ENCODE measurements at regions of chr11 and their contacts with region 1.

Region 1: GRCh38 chr11:33161120-33162005 is at the start of gene CSTF3:
- DNase-seq: peak; percentile 99 to 100
- ATAC-seq: peak; percentile 99
- H3K4me3 ChIP-seq: peak within 1 kb of the TSS; percentile 85 to 97 (median 92)
- H3K27ac ChIP-seq: peak within 1 kb of the TSS; percentile 88 to 95 (median 90)
- H3K4me1 ChIP-seq: peaks cover 24 to 40% of the 10 kb centered on the region in 2 donors
- H3K27me3 ChIP-seq: no peaks in the 10 kb centered on the region
- CTCF ChIP-seq: peak; percentile 52 to 82 (median 67)
- POLR2A ChIP-seq: peak; percentile 57 to 71
- total RNA-seq, gene CSTF3: 3.3 to 9.5 (median 6.1) TPM

Region 2: GRCh38 chr11:32583459-32584271 is 577.7 kb before region 1 on chr11 and contains the start of gene EIF3M:
- in situ Hi-C with region 1: loop called in 2 of 4 experiments (anchors 25 kb)
- intact Hi-C with region 1: loop called (anchors 10 kb)
- DNase-seq: peak; percentile 88 to 94
- ATAC-seq: peak; percentile 96 to 98
- H3K4me3 ChIP-seq: peak within 1 kb of the TSS; percentile 76 to 92 (median 80)
- H3K27ac ChIP-seq: peak within 1 kb of the TSS; percentile 76 to 88 (median 80)
- H3K4me1 ChIP-seq: peaks cover 21 to 24% of the 10 kb centered on the region in 2 donors
- H3K27me3 ChIP-seq: no peaks in the 10 kb centered on the region
- CTCF ChIP-seq: no peak
- POLR2A ChIP-seq: peak; percentile 55 to 71
- total RNA-seq, gene EIF3M: 335 to 393 (median 355) TPM

Region 3: GRCh38 chr11:32870676-32871075 is 290.7 kb before region 1 on chr11:
- in situ Hi-C with region 1: no loop called
- intact Hi-C with region 1: no loop called
- DNase-seq: no peak
- ATAC-seq: no peak
- H3K4me3 ChIP-seq: no peak overlapping the region
- H3K27ac ChIP-seq: no peak overlapping the region
- H3K4me1 ChIP-seq: no peaks in the 10 kb centered on the region
- H3K27me3 ChIP-seq: no peaks in the 10 kb centered on the region
- CTCF ChIP-seq: peak in 1 of 5 experiments; percentile 41
- POLR2A ChIP-seq: no peak

Region 4: GRCh38 chr11:33015621-33016551 is 145.5 kb before region 1 on chr11 and contains the start of gene DEPDC7:
- in situ Hi-C with region 1: no loop called
- intact Hi-C with region 1: loop called (anchors 1 kb)
- DNase-seq: peak; percentile 74 to 88
- ATAC-seq: peak; percentile 94 to 97
- H3K4me3 ChIP-seq: peak within 1 kb of the TSS; percentile 65 to 89 (median 69)
- H3K27ac ChIP-seq: peak within 1 kb of the TSS; percentile 76 to 86 (median 84)
- H3K4me1 ChIP-seq: peaks cover 26% of the 10 kb centered on the region in 2 donors
- H3K27me3 ChIP-seq: no peaks in the 10 kb centered on the region
- CTCF ChIP-seq: no peak
- POLR2A ChIP-seq: peak; percentile 45 to 74
- total RNA-seq, gene DEPDC7: 2.0 to 5.8 (median 2.8) TPM

Region 5: GRCh38 chr11:33039274-33040032 is 121.9 kb before region 1 on chr11 and contains the start of gene TCP11L1:
- in situ Hi-C with region 1: no loop called
- intact Hi-C with region 1: loop called (anchors 2 kb)
- DNase-seq: peak; percentile 83 to 88
- ATAC-seq: peak; percentile 94 to 95
- H3K4me3 ChIP-seq: peak within 1 kb of the TSS; percentile 79 to 97 (median 91)
- H3K27ac ChIP-seq: peak within 1 kb of the TSS; percentile 90 to 95 (median 94)
- H3K4me1 ChIP-seq: peaks cover 6 to 15% of the 10 kb centered on the region in 2 donors
- H3K27me3 ChIP-seq: no peaks in the 10 kb centered on the region
- CTCF ChIP-seq: no peak
- POLR2A ChIP-seq: peak; percentile 51 to 64
- total RNA-seq, gene TCP11L1: 8.3 to 22.4 (median 19.0) TPM

Region 6: GRCh38 chr11:33329705-33330329 is 168.5 kb after region 1 on chr11:
- in situ Hi-C with region 1: loop called (anchors 5 kb)
- intact Hi-C with region 1: loop called (anchors 2 kb)
- DNase-seq: peak; percentile 27 to 43
- ATAC-seq: peak; percentile 74 to 90
- H3K4me3 ChIP-seq: no peak overlapping the region
- H3K27ac ChIP-seq: peak overlapping the region in 3 of 4 donors; percentile 4 to 47 (median 11)
- H3K4me1 ChIP-seq: peaks cover 84 to 87% of the 10 kb centered on the region in 2 donors
- H3K27me3 ChIP-seq: no peaks in the 10 kb centered on the region
- CTCF ChIP-seq: peak; percentile 57 to 72 (median 64)
- POLR2A ChIP-seq: no peak

Region 7: GRCh38 chr11:33687733-33688479 is 526.5 kb after region 1 on chr11:
- in situ Hi-C with region 1: loop called in 1 of 4 experiments (anchors 25 kb)
- intact Hi-C with region 1: loop called (anchors 5 kb)
- DNase-seq: no peak
- ATAC-seq: no peak
- H3K4me3 ChIP-seq: no peak overlapping the region
- H3K27ac ChIP-seq: peak overlapping the region in 1 of 4 donors; percentile 78
- H3K4me1 ChIP-seq: peaks cover 21 to 37% of the 10 kb centered on the region in 2 donors
- H3K27me3 ChIP-seq: no peaks in the 10 kb centered on the region
- CTCF ChIP-seq: peak; percentile 38 to 68 (median 60)
- POLR2A ChIP-seq: no peak

Region 8: DNA sequence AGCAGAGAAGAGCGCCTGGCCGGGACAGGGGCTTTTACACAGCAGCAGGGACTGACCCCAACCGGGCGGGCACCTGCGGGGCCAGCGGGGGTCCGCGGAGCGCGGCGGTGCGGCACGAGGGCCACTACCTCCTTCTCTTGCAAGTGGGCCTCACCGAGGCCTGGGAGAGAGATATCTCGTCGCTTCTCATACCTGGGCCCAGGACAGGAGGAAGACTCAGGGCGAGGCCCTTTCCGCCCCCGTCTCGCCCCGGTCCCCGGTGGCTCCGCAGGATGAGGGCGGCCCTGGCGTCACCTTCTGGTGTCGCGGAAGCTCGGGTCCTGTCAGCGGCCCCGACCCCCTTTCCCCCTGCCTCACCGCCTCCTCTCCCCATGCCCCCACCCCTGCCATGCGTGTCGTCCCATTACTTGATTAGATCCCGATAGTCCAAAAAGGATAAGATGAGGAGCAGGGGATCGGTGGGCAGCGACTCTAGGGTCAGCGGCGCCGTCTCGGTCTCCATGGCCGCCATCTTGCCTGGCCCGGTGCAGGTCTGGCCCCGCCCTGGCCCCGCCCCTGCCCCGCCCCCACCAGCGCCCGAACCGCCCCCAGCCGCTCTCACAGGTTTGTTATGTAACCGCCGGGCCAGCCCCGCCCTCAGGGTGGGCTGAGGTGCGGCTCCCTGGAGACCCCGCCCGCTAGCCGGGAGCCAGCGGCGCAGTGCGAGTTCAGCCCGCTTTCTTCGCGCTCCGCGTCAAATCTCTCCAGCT is 612.8 kb after region 1 on chr11 and contains the start of gene FBXO3:
- in situ Hi-C with region 1: loop called in 2 of 4 experiments (anchors 25 kb)
- intact Hi-C with region 1: no loop called
- DNase-seq: peak; percentile 60 to 72
- ATAC-seq: peak; percentile 84 to 88
- H3K4me3 ChIP-seq: peak within 1 kb of the TSS; percentile 91 to 98 (median 96)
- H3K27ac ChIP-seq: peak within 1 kb of the TSS; percentile 93 to 96 (median 93)
- H3K4me1 ChIP-seq: peaks cover 27 to 32% of the 10 kb centered on the region in 2 donors
- H3K27me3 ChIP-seq: no peaks in the 10 kb centered on the region
- CTCF ChIP-seq: no peak
- POLR2A ChIP-seq: peak; percentile 53 to 54
- total RNA-seq, gene FBXO3: 31.2 to 45.8 (median 33.4) TPM

Measured in gastrocnemius medialis (tissue), 4 donors.